Esophagus muscularis mucosa (tissue), 4 donors: ENCODE measurements at regions of chr15 and their contacts with region 1.

Region 1: GRCh38 chr15:34223904-34224596 is 766 bp upstream of the EMC4 start:
- DNase-seq: no peak
- H3K4me3 ChIP-seq: peak overlapping the region; percentile 60 to 84 (median 73)
- H3K27ac ChIP-seq: peak overlapping the region; percentile 83 to 90 (median 86)
- H3K4me1 ChIP-seq: peaks cover 17 to 25% (median 22%) of the 10 kb centered on the region in 4 donors
- H3K27me3 ChIP-seq: no peaks in the 10 kb centered on the region
- CTCF ChIP-seq: no peak
- EP300 ChIP-seq: no peak
- POLR2A ChIP-seq: no peak

Region 2: GRCh38 chr15:34297059-34297458 is 73.0 kb after region 1 on chr15:
- intact Hi-C with region 1: no loop called
- DNase-seq: no peak
- H3K4me3 ChIP-seq: no peak overlapping the region
- H3K27ac ChIP-seq: peak overlapping the region in 2 of 4 donors; percentile 11 to 45
- H3K4me1 ChIP-seq: peaks cover 10 to 16% (median 16%) of the 10 kb centered on the region in 4 donors
- H3K27me3 ChIP-seq: no peaks in the 10 kb centered on the region
- CTCF ChIP-seq: no peak
- EP300 ChIP-seq: no peak
- POLR2A ChIP-seq: no peak

Region 3: DNA sequence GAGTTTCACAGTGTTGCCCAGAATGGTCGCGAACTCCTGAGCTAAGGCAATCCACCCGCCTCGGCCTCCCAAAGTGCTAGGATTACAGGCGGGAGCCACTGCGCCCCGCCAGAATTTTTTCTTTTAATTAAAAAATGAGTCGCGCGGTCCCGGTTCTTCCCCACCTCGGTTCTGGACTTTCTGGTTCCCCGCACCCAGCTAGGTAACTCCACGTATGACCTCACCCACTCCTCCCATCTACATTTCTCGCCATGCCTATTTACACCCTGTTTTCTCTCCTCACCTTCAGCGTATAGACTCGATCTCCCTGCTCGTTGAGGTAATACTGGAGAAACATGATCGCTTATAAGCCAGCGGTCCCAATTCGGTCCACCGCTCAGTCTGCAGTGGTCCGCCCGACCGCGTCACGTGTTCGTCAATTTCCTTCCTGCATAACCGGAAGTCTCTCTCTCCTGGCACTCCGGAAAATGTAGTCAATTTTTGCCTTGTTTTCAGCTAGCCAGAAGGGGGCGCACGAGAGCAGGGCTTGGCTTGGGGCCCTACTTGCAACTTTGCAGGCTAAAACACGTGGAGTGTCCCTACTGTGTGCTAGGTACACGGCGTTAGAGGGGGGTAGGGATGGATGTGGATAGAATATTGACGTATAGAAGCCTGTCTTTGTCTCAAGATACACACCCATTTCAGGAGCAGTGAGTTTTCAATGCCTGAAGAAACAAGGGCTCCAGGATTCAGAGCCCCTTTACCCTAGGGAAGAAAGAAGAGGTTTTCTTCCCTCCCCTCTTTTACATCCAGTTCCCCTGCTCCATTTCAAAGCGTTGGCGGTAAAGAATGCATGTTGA is 118.9 kb after region 1 on chr15 and contains the starts of genes NOP10 and NUTM1:
- intact Hi-C with region 1: loop called (anchors 5 kb)
- DNase-seq: peak; percentile 97
- H3K4me3 ChIP-seq: peak within 1 kb of the TSS; percentile 64 to 87 (median 74)
- H3K27ac ChIP-seq: peak within 1 kb of the TSS; percentile 88 to 90 (median 89)
- H3K4me1 ChIP-seq: peaks cover 18 to 29% (median 23%) of the 10 kb centered on the region in 4 donors
- H3K27me3 ChIP-seq: no peaks in the 10 kb centered on the region
- CTCF ChIP-seq: peak; percentile 84 to 97 (median 92)
- EP300 ChIP-seq: no peak
- POLR2A ChIP-seq: peak; percentile 67
- total RNA-seq, gene NOP10: 78.5 to 136 (median 116) TPM
- total RNA-seq, gene NUTM1: not detected

Region 4: GRCh38 chr15:34987985-34988873 is 764.2 kb after region 1 on chr15 and contains the start of gene ZNF770:
- intact Hi-C with region 1: loop called (anchors 10 kb)
- DNase-seq: peak; percentile 95
- H3K4me3 ChIP-seq: peak within 1 kb of the TSS; percentile 71 to 84 (median 79)
- H3K27ac ChIP-seq: peak within 1 kb of the TSS; percentile 93 to 96 (median 95)
- H3K4me1 ChIP-seq: peaks cover 34 to 45% (median 42%) of the 10 kb centered on the region in 4 donors
- H3K27me3 ChIP-seq: no peaks in the 10 kb centered on the region
- CTCF ChIP-seq: peak in 1 of 3 experiments; percentile 35
- EP300 ChIP-seq: no peak
- POLR2A ChIP-seq: peak; percentile 65
- total RNA-seq, gene ZNF770: 18.5 to 23.7 (median 20.2) TPM